A549 (cell line): ENCODE measurements at regions of chr19 and their contacts with region 1.

Region 1: DNA sequence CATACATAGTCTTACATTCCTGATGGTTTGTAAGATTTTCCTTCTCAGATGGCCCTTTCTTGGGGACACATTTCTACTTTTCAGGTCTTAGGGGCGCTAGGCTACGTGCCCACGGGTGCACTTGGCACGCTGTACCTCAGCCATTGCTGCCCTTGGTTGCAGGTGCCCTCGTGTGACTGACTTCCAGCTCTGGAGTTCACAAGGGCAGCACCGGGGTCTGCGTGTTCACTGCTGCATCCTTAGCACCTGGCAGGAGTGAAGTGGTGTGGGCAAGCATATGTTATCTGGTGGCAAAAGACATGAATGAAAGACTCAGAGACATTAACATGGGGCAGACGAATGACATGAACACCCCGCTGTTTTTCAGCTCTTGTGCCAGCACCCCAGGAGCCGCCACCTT is 13.3 kb upstream of the WDR88 start:
- DNase-seq: no peak
- ATAC-seq: peak; percentile 45 to 52; a peak in 5 of 6 replicates
- H3K4me3 ChIP-seq: no peak overlapping the region
- H3K27ac ChIP-seq: peak overlapping the region; percentile 1 to 27; a peak in 3 of 6 replicates
- H3K4me1 ChIP-seq: 0 out of 3 replicates have a peak, but pooled peaks cover 3% of the 10 kb centered on the region
- CTCF ChIP-seq: no peak
- EP300 ChIP-seq: no peak
- POLR2A ChIP-seq: no peak
- RAD21 ChIP-seq: no peak

Region 2: DNA sequence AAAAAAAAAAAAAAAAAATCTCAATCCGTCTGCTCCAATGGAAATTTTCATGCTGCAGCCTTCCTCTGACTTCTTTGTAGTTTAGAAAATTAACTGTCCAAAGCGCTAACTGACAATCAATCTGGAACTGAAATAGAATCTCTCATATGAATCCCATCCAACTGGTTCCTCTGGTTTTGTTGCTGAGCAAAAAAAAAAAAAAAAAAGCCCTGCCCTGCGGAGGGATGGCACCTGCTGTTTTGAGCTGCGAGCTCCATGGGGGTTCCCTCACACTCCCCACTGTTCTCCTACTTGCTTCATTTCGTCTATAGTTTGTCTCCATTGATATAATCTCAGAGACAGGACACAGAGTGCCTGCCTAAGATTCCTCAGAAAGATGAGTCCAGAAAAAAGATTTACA is 113.2 kb before region 1 on chr19:
- CTCF ChIA-PET with region 1: interaction called, 14 read pairs
- POLR2A ChIA-PET with region 1: no interaction called
- DNase-seq: no peak
- ATAC-seq: no peak
- H3K4me3 ChIP-seq: no peak overlapping the region
- H3K27ac ChIP-seq: no peak overlapping the region
- H3K4me1 ChIP-seq: peaks cover 24% of the 10 kb centered on the region
- CTCF ChIP-seq: no peak
- EP300 ChIP-seq: no peak
- POLR2A ChIP-seq: no peak
- RAD21 ChIP-seq: no peak

Region 3: GRCh38 chr19:33029746-33030303 is 88.8 kb before region 1 on chr19:
- CTCF ChIA-PET with region 1: interaction called, 20 read pairs
- POLR2A ChIA-PET with region 1: no interaction called
- DNase-seq: peak in 1 of 2 experiments; percentile 57
- ATAC-seq: no peak
- H3K4me3 ChIP-seq: no peak overlapping the region
- H3K27ac ChIP-seq: no peak overlapping the region
- H3K4me1 ChIP-seq: peaks cover 35% of the 10 kb centered on the region
- CTCF ChIP-seq: no peak
- EP300 ChIP-seq: no peak
- POLR2A ChIP-seq: no peak
- RAD21 ChIP-seq: no peak

Region 4: GRCh38 chr19:33064792-33065550 is 53.7 kb before region 1 on chr19 and contains the start of gene RHPN2:
- CTCF ChIA-PET with region 1: interaction called, 11 read pairs
- POLR2A ChIA-PET with region 1: interaction called, 8 read pairs
- DNase-seq: peak; percentile 93 to 94
- ATAC-seq: peak; percentile 85 to 91
- H3K4me3 ChIP-seq: peak within 1 kb of the TSS; percentile 84
- H3K27ac ChIP-seq: peak within 1 kb of the TSS; percentile 90 to 93
- H3K4me1 ChIP-seq: peaks cover 61% of the 10 kb centered on the region
- CTCF ChIP-seq: no peak
- EP300 ChIP-seq: no peak
- POLR2A ChIP-seq: peak; percentile 90
- RAD21 ChIP-seq: peak in 1 of 2 experiments; percentile 50; a peak in 3 of 5 replicates
- polyA plus RNA-seq, gene RHPN2: 140 and 162 TPM in 2 replicates

Region 5: GRCh38 chr19:33090052-33090578 is 28.5 kb before region 1 on chr19:
- CTCF ChIA-PET with region 1: interaction called, 37 read pairs
- POLR2A ChIA-PET with region 1: no interaction called
- DNase-seq: no peak
- ATAC-seq: no peak
- H3K4me3 ChIP-seq: no peak overlapping the region
- H3K27ac ChIP-seq: no peak overlapping the region
- H3K4me1 ChIP-seq: peaks cover 7% of the 10 kb centered on the region; the same call in 2 of the 3 replicates
- CTCF ChIP-seq: no peak
- EP300 ChIP-seq: no peak
- POLR2A ChIP-seq: no peak
- RAD21 ChIP-seq: no peak